Tibial artery (tissue), 4 donors: ENCODE measurements at regions of chr6 and their contacts with region 1.

Region 1: DNA sequence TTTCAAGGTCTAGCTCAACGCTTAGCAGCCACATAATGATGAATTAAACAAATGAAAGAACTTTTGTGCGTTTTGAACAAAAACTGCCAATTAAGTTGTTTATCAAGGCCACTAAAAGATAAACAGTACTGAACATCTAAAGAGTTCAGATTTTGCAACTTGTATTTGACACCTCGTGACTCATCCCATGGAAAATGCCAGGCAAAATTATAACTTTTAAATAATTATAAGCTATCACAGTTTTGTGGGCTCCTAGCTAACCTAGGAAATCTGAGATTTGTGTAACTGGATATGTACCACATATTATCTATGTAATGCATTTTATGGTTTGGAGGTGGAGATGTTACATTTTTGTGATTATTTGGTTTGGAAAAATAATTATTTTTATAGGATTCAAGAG is 9.6 kb upstream of the BAG2 start:
- DNase-seq: no peak
- H3K4me3 ChIP-seq: no peak overlapping the region
- H3K27ac ChIP-seq: no peak overlapping the region
- H3K4me1 ChIP-seq: no peaks in the 10 kb centered on the region
- H3K27me3 ChIP-seq: no peaks in the 10 kb centered on the region
- CTCF ChIP-seq: no peak

Region 2: DNA sequence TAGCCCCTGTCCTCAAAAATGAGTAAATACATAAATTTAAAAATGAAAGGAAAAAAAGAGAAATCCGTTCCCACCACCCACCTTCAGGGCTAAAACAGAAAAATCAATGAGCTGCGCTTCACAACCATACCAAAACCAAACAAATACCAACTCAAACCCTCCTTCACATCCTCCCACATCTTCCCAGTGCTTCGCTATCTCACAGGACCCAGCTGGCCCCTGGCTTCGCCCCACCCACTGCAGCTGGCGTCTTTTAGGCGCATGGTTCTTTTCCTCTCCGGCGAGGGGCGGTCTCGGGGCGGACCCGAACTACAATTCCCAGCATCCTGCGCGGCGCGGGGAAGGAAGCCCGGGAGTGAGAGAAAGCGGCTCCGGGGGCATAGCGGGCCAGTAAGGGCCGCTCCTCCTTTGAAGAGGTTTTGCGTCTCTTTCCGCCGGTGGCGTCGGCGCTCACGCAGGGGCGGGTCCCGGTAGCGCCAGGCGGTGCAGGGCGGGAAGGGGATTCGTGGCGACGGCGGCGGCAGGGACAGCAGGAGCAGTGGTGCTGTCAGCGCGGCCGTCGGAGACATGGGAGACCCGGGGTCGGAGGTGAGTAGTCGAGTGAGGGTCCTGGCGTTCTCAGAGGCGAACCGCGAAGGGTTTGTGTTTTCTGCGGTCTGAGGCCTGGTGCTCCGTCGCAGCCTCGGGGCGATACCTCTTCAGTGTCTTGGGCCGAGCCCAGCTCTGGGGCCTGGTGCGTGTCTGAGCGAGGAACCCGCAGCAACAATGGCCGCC is 72.6 kb before region 1 on chr6 and contains the start of gene ZNF451:
- intact Hi-C with region 1: loop called (anchors 10 kb)
- DNase-seq: peak; percentile 98 to 99
- H3K4me3 ChIP-seq: peak within 1 kb of the TSS; percentile 65
- H3K27ac ChIP-seq: peak within 1 kb of the TSS; percentile 80 to 83
- H3K4me1 ChIP-seq: peaks cover 0 to 36% (median 22%) of the 10 kb centered on the region in 4 donors
- H3K27me3 ChIP-seq: no peaks in the 10 kb centered on the region
- CTCF ChIP-seq: no peak

Region 3: DNA sequence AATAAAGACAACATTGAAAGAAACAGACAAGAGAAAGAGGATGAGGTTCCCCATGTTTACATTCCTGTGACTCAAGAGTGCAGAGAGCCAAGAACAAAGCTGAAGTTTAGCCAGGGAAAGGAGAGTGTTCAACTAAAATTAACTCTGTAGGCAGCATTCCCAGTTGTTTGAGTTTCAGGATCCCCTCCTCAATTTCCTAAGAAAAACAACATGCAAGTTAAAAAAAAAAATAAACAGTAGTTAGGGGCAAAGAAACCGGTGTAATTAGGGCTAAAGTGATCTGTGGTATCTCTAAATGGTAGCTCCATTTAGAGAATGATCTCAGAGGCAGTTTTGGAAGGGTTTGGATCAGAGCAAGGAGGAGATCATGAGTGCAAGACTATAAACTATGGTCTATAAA is 90.5 kb after region 1 on chr6:
- intact Hi-C with region 1: no loop called
- DNase-seq: no peak
- H3K4me3 ChIP-seq: no peak overlapping the region
- H3K27ac ChIP-seq: peak overlapping the region; percentile 64 to 68
- H3K4me1 ChIP-seq: peaks cover 0 to 35% (median 11%) of the 10 kb centered on the region in 4 donors
- H3K27me3 ChIP-seq: no peaks in the 10 kb centered on the region
- CTCF ChIP-seq: no peak